ENCODE measurements at regions of chr12 and their contacts with region 1.

Region 1: DNA sequence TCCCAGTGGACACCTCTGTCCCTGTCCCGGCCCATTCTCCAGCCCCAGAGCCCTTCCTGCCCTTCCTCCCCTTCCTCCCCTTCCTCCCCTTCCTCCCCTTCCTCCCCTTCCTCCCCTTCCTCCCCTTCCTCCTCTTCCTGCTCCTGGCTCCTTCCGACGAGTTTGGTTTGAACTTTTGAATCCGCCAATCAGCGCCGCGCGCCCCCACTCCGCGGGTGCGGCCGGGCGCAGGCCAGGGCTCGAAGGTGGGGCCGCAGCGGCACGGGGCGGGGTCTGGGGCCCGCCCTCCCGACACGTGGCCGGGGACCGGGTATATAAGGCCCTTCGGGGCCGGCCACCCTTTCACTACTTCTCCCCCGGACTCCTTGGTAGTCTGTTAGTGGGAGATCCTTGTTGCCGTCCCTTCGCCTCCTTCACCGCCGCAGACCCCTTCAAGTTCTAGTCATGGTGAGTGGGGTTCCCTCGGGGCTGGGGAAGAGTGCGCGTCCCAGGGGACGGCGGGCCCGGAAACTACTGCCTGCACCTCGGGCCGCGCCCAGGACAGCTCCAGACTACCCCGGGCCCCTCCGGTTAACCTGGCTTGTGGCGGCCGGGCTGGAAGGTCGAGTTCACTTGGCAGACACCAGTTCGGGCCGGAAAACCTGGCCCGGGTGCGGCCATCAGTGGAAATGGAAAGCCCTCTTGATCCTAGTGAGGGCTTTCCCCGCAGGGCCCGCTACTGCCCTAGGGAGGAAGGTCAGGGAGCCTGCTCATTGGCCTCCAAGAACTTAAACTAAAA is at the start of gene TUBA1C:
- DNase-seq: peak; percentile 95
- H3K4me3 ChIP-seq: peak within 1 kb of the TSS; percentile 85
- H3K27ac ChIP-seq: peak within 1 kb of the TSS; percentile 84
- H3K4me1 ChIP-seq: peaks cover 35% of the 10 kb centered on the region
- CTCF ChIP-seq: no peak
- total RNA-seq, gene TUBA1C: 256 and 291 TPM in 2 replicates

Region 2: GRCh38 chr12:49232940-49233841 is 31.7 kb before region 1 on chr12:
- CTCF ChIA-PET with region 1: no interaction called
- POLR2A ChIA-PET with region 1: interaction called, 4 read pairs
- intact Hi-C with region 1: loop called (anchors 1 kb)
- DNase-seq: no peak
- H3K4me3 ChIP-seq: no peak overlapping the region
- H3K27ac ChIP-seq: no peak overlapping the region
- H3K4me1 ChIP-seq: peaks cover 4% of the 10 kb centered on the region
- CTCF ChIP-seq: no peak

Region 3: DNA sequence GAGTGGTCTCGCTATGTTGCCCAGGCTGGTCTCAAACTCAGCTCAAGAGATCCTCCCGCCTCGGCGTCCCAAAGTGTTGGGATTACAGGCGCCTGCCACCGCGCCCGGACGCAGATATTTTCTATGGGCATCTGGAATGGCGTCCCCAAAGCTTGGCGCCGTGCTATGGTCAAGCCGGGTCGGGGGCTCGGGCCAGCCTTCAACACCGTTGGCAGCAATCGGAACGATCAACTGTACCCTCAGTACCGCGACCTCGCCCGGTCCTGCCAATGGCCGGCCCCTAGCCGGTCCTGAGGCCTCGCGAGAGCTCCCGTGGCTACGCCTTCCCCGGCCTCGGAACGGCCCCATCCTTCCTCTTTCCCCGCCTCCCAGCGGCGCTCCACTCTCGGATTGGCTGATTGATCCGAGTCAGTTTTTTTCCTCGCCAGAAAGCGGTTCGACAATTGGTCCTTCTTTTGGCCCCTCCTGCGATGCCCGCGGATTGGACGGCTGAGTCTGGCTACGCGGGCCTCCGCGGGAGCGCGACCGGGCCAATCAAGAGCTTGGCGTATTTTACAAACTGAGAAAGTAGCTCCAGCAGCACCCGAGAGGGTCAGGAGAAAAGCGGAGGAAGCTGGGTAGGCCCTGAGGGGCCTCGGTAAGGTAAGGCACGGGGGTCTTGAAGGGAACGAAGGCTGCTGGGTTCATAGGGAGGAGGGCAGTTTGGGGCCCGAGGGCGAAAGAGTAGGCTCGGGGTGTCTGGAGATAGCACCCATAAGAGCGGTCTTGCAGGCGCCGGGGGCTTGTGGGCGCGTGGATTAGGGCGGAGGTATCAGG is 58.0 kb after region 1 on chr12 and contains the start of gene TROAP:
- CTCF ChIA-PET with region 1: interaction called, 3 read pairs
- POLR2A ChIA-PET with region 1: interaction called, 8 read pairs
- intact Hi-C with region 1: loop called (anchors 2 kb)
- DNase-seq: peak; percentile 99
- H3K4me3 ChIP-seq: peak within 1 kb of the TSS; percentile 91
- H3K27ac ChIP-seq: peak within 1 kb of the TSS; percentile 61
- H3K4me1 ChIP-seq: peaks cover 24% of the 10 kb centered on the region
- CTCF ChIP-seq: no peak
- total RNA-seq, gene TROAP: 116 and 150 TPM in 2 replicates

Region 4: DNA sequence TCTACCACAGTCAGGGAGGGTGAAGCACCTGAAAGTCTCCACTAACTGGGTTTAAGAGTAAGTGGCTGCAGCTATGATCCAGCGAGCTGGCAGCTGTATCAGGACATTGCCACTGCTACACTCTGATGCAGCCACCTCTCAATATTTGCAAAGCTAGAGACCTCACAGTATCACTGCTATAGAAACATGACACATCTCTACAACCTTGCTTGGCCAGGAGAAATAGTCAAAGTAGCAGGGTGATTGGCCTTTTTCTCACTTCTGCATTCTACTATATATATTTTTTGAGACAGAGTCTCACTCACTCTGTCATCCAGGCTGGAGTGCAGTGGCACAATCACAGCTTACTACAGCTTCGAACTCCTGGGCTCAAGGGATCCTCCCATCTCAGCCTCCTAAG is 451.6 kb after region 1 on chr12:
- CTCF ChIA-PET with region 1: no interaction called
- POLR2A ChIA-PET with region 1: no interaction called
- intact Hi-C with region 1: no loop called
- DNase-seq: no peak
- H3K4me3 ChIP-seq: no peak overlapping the region
- H3K27ac ChIP-seq: no peak overlapping the region
- H3K4me1 ChIP-seq: peaks cover 13% of the 10 kb centered on the region
- CTCF ChIP-seq: no peak

Measured in OCI-LY7 (cell line).